ENCODE measurements at regions of chr3 and their contacts with region 1.

Region 1: DNA sequence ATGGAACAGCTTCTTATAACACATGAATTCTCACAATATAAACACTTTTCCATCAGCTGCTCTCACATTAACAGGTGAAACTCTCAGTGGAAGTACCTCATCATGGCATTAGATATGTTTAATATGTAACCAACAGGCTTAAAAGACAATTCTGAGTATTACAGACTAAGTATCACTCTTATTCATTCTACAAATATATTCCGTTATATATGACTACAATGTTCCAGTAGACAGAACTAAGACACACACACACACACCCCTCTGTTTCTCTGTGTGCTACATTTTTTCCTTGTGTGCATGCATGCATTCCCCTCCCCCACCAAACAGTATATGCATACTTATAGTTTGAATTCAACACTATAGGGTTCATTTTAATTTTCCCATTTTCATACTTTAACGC is 32.4 kb downstream of the MRPL3 start:
- DNase-seq: no peak
- CTCF ChIP-seq: no peak

Region 2: DNA sequence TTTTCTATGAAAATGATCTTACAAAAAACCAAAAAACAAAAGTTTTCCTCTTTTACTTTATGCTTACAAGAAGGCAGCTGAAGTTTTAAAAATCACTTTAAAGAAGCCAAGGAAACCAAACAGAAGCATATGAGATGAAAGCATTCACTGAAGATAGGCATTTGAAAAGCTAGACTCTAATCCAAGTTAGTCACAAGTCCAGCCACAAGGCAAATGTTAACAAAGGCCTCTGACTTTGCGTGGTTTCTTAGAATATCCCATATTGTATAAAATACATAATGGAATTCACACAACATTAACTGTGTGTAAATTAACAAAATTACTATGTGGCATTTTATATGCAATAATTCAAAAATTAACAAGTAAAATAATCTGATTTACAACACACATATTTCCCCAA is 14.7 kb after region 1 on chr3:
- CTCF ChIA-PET with region 1: interaction called, 13 read pairs
- POLR2A ChIA-PET with region 1: no interaction called
- DNase-seq: no peak
- CTCF ChIP-seq: no peak